ENCODE measurements at regions of chr14 and their contacts with region 1.

Region 1: DNA sequence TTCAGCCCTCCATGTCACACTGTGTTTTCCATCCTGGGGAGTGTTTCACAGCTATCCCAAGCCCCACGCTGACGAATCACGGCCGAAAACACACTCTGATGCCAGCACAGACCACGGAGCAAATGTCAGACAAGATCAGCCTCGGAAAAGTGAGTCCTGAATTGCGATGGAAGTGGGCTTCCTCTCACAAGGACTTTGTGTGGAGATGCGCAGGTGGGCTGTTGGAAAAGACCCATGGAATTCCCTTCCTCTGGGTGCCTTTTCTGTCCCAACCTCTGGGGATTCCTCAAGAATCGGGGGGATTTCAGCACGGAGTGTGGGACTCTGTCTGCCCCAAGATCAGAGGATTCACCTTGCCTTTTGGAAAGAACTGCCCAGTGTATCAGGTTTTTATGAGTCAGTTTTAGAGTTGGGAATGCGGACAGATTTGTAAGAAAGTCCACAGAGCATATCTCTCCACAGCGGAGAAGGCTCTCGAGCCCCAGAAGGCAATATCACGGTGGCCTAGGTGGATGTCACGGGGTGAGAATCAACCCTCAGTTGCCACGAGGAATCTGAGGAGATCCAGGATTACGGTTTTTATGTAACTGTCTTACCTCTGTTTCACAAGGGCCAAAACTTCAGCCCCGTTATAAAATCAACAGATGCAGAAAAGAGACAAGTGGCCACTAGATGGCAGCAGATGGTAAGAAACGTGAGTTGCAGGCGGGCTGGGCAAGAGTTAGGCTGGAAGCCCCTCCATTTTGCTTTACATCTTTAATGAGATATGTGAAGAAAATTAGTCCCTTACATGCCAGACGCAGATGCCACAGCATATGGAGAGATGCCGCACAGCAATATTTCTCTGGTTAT is 201.9 kb downstream of the DAD1 start:
- DNase-seq: no peak
- ATAC-seq: peak; percentile 74

Region 2: GRCh38 chr14:22472935-22473854 is 86.0 kb after region 1 on chr14:
- intact Hi-C with region 1: loop called (anchors 5 kb)
- DNase-seq: no peak
- ATAC-seq: peak; percentile 45

Region 3: GRCh38 chr14:22556990-22557623 is 170.0 kb after region 1 on chr14:
- intact Hi-C with region 1: loop called (anchors 5 kb)
- DNase-seq: peak; percentile 89
- ATAC-seq: peak; percentile 92

Region 4: DNA sequence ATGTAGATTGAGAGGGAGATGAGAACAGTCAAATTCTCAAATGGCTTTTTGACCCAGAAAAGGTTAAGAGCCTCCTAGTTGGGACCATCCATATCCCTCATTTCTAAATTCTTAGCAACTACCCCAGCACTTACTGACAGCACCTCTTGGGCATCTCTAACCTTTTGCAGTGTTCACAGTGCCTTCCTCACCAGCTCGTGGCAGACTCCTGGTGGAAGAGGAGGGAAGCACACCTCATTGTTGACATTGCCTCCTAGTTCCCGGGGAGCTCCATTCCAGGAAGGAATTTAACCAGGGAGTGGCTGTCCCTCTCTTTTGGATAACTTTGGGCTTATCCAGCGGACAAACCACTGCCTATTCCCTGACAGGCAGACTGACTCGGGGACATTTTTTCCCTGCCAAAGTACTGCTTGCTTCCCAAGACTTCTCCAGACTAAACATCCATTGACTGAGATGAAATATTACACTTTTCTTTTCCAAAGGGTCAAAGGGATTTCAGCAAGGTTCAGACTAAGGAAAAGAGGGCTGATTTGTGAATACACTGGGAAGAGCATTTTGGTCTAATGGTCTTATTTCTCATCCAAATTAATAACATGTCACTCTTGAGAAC is 266.0 kb after region 1 on chr14:
- intact Hi-C with region 1: loop called (anchors 5 kb)
- DNase-seq: peak; percentile 53
- ATAC-seq: peak; percentile 88

Region 5: DNA sequence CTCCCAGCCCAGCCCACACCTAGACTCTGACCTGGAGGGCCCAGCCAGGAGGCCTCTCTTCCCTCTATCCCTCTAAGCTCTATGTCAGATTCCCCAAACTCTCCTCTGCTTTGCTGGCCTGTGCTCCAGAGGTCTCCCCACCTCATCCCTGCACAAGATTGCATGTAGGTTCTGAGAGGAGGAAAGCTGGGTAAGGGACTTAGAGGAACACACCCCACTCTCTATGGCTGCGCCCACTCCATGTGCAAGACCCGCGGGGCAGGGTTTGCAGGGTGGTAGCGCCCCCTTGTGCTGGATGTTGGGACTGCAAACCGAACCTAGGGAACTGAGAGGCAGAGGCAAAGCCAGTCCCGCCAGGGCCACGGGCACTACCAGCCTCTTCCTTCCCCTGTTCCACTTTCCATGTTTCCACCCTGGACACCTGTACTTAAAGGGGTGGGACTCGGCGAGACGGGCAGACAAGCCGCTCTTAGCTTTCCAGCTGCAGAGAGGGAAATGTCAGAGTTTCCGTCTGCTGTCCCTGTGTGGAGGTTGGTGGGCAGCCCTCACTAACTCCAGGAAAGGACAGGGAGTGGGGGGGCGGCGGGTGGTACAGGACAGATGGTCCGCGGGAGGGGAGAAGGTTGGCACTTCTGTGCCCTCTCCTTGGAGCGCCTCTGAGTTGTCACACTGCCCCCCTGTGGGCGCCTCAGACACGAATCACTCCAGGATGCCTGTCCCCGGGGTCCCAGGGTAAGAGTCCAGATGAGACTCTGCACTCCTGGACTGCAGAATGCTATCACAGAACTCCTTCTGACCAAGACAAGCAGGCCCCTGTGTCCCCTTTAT is 466.0 kb after region 1 on chr14:
- intact Hi-C with region 1: loop called (anchors 10 kb)
- DNase-seq: peak; percentile 94
- ATAC-seq: peak; percentile 69

Region 6: GRCh38 chr14:23286020-23286905 is 899.1 kb after region 1 on chr14 and contains the start of gene HOMEZ:
- intact Hi-C with region 1: no loop called
- DNase-seq: peak; percentile 100
- ATAC-seq: peak; percentile 98
- total RNA-seq, gene HOMEZ: 6.5 TPM